Activated CD8-positive, alpha-beta memory T cell treated with anti-CD3 and anti-CD28 coated beads, Interleukin-2, amount 10 ng/mL, durations not matched to agents 7 days and 5 days (primary cell): ENCODE measurements at regions of chr3 and their contacts with region 1.

Region 1: GRCh38 chr3:156151824-156152428 is 31.5 kb downstream of the KCNAB1 start:
- DNase-seq: peak; percentile 68
- ATAC-seq: peak; percentile 65
- H3K4me3 Mint-ChIP-seq: no peak overlapping the region
- H3K27ac Mint-ChIP-seq: no peak overlapping the region
- H3K4me1 Mint-ChIP-seq: peaks cover 11% of the 10 kb centered on the region
- H3K27me3 Mint-ChIP-seq: peaks cover 7% of the 10 kb centered on the region

Region 2: GRCh38 chr3:156382458-156383346 is 230.8 kb after region 1 on chr3:
- CTCF ChIA-PET with region 1: interaction called, 19 read pairs
- DNase-seq: no peak
- ATAC-seq: peak; percentile 42
- H3K4me3 Mint-ChIP-seq: no peak overlapping the region
- H3K27ac Mint-ChIP-seq: no peak overlapping the region
- H3K4me1 Mint-ChIP-seq: no peaks in the 10 kb centered on the region
- H3K27me3 Mint-ChIP-seq: peaks cover 43% of the 10 kb centered on the region

Region 3: GRCh38 chr3:156449712-156450574 is 298.0 kb after region 1 on chr3:
- CTCF ChIA-PET with region 1: interaction called, 10 read pairs
- DNase-seq: no peak
- ATAC-seq: peak; percentile 55
- H3K4me3 Mint-ChIP-seq: no peak overlapping the region
- H3K27ac Mint-ChIP-seq: no peak overlapping the region
- H3K4me1 Mint-ChIP-seq: no peaks in the 10 kb centered on the region
- H3K27me3 Mint-ChIP-seq: peaks cover 21% of the 10 kb centered on the region

Region 4: DNA sequence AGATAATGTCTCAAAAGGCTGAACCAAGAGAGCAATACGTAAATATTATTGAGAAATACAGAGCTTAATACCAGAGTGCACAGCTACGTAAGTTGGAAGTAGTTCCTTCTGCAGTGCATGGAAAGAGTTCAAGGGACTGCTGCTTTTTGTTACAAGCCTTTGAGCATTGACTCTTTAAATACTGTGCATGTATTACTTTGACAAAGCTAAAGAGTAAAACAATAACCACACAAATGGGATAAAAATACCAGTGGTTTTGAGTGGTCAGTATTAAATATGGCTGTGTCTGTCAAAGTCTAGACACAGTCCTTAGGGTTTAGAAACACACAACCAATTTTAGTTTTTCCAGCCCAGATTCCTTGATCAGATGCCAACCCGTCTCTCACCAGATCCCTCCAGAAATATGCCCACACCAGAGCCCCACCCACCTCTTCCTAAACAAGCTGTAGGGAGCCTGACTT is 340.9 kb after region 1 on chr3:
- CTCF ChIA-PET with region 1: no interaction called
- DNase-seq: no peak
- ATAC-seq: no peak
- H3K4me3 Mint-ChIP-seq: no peak overlapping the region
- H3K27ac Mint-ChIP-seq: no peak overlapping the region
- H3K4me1 Mint-ChIP-seq: peaks cover 7% of the 10 kb centered on the region
- H3K27me3 Mint-ChIP-seq: no peaks in the 10 kb centered on the region